ENCODE measurements at regions of chr2 and their contacts with region 1.

Region 1: DNA sequence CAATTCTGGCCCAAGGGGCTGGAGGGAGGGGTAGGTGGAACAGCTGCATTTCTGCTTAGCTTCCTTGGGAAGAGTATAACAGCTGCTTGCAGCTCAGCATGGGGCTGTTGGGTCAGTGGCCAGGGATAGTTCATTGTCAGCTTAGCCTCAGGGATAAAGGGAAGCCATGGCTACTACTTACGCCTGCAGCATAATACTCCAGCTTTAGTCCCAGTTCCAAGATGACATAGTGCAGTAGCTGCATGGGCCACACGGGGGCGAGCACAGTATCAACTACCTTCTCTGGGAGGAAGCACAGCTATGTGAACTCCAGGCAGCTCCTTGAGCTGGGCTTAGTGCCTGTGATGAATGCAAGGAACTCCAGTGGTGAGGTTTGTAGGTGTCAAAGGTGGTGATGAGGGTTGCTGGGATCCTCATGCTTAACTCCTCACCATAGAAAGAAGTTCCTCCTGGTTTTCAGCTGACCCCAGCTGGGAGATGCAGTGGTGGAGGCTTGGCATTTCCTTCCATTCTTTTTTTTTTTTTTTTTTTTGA is 35.4 kb upstream of the RHOB start:
- DNase-seq: peak; percentile 38
- H3K4me3 ChIP-seq: no peak overlapping the region
- H3K27ac ChIP-seq: no peak overlapping the region
- H3K27me3 ChIP-seq: no peaks in the 10 kb centered on the region
- CTCF ChIP-seq: peak; percentile 88

Region 2: DNA sequence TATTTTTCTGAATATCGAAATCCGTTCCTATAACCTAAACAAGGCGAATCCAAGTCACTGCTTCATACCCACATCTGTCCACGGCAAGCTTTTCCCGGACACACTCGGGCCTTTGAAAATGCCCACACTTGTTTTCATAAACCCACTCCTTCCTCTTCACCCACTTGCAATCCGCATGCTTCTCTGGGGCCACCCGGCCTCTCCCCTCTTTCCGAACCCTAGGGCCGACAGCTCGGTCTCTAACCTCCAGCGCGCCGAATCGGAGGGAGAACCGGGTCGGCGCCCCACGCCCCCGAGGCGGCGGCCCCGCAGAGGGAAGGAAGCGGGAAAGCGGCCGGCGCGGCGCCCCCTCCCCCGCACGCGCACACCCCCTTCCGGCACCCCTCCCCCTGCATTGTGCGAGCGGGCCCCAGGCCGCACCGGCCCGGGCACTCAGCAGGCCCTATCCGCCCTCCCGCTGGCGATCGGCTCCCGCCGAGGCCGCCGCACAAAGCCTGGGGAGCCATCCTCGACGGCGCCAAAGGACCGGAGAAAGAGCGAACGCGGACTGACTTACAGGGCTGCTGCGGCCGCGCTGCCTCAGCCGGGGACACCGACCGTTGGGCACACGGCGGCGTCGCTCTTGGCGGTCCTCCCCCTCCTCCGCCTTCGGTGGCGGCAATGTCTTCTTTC is 61.3 kb before region 1 on chr2:
- CTCF ChIA-PET with region 1: no interaction called
- POLR2A ChIA-PET with region 1: no interaction called
- DNase-seq: no peak
- H3K4me3 ChIP-seq: peak overlapping the region; percentile 81
- H3K27ac ChIP-seq: peak overlapping the region; percentile 68
- H3K27me3 ChIP-seq: no peaks in the 10 kb centered on the region
- CTCF ChIP-seq: no peak

Region 3: DNA sequence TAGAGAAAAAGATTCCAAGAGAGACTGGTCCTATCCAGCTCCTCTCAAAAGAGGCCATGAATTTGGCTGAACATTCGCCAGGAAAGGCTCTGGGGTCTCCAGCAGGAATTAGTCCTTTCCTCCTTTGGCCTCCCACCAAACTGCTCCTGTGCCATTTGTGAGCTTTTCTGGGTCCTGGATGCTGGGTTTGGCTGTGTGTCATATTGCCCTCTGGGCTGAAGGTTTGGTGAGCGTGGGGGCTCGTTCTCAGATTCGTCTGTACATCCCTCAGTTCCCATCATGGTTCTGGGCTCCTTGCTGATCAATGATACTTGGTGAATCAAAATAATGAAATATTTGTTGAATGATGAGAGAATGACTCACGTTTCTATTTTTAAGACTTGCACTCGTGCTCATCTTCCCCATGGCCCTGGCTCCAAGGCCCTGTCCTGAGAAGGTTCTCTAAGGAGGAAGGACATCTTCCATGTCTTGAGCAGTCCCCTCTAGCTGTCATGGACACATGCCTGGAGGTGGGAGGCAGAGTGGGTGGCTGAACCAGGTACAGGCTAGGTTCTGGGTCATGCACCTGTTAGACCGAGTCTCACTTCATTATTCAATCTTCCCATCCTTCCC is 12.4 kb before region 1 on chr2:
- CTCF ChIA-PET with region 1: interaction called, 45 read pairs
- POLR2A ChIA-PET with region 1: no interaction called
- DNase-seq: no peak
- H3K4me3 ChIP-seq: no peak overlapping the region
- H3K27ac ChIP-seq: no peak overlapping the region
- H3K27me3 ChIP-seq: peaks cover 19% of the 10 kb centered on the region
- CTCF ChIP-seq: no peak

Region 4: DNA sequence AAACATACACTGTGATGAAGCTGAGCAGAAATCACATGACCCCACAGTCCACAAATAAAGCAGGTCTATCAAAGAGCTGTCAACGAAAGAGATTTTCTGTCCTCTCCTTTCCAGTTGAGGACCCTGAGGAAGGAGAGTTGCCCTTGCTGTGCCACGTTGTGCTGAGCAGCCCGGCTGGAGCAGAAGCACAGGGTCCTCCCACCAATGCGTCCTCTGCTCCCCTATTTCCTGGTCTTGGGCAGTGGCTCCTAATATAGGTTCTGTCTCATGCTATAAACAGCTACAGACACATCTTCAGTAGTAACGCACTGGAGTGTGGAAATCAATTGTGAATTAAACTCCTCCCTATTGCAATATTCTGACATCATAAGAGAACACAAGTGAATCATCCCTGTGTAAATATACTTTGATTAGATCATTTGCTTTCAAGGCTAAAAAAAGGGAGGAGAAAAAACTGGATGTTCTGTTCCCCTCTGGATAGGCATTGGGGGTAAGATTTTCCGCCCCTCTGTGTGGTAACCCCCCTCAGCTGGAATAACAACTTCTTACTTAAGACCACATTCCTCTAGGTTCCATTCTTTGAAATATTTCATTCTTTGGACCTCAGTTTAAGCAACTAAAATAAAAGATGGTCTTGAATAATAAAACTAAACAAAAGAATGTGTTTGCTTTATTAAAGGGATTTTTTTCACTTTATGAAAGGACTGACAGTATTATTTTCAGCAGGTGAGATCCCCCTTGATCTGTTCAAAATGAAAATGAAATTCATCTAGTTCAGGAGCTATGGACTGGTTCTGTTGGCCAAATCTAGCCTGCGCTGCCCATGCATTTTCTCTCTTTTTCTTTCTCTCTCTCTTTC is 27.1 kb after region 1 on chr2:
- CTCF ChIA-PET with region 1: interaction called, 71 read pairs
- POLR2A ChIA-PET with region 1: interaction called, 5 read pairs
- DNase-seq: no peak
- H3K4me3 ChIP-seq: no peak overlapping the region
- H3K27ac ChIP-seq: peak overlapping the region; percentile 69
- H3K27me3 ChIP-seq: no peaks in the 10 kb centered on the region
- CTCF ChIP-seq: no peak

Region 5: DNA sequence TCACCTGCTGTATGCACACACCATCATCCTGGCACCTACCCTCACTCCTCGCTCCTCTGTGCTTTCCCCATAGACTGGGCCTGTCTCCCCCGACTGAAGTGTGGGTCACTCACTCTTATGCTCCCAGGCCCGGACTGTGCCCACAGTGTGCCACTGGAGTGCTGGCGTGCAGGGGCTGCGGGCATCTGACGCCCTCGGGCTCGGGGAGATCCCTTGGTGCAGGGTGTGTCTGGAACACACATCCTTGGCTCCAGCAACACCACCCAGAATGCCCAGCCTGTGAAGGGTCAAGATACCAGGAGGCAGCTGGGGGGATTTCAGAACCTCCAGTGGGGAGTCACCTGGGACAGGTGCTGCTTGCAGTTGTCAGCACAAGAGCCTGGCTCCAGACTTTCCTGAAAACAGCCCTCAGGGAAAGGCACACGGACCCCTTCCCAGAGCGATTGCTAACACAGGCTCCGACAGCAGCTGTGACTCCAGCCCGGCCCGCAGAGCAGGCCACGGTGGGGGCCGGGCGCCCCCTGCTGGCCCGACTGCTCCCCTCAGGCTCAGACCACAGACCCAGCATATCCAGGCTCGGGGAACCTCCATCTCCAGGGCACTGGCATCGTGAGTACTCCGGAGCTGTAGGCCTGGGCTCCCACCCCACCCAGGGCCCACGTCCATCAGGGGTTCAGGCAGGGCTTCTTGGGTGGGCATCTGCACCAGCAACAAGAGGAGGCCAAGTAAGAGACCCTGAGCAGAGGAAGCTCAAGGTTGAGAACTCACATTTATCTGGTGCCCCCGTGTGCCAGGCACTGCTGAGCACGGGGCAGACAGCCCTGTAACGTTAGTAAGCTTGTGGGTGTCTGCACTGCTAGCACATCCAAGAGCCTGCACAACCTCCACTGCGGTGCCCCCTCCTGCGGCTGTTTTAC is 230.9 kb after region 1 on chr2:
- CTCF ChIA-PET with region 1: interaction called, 118 read pairs
- POLR2A ChIA-PET with region 1: no interaction called
- DNase-seq: no peak
- H3K4me3 ChIP-seq: no peak overlapping the region
- H3K27ac ChIP-seq: no peak overlapping the region
- H3K27me3 ChIP-seq: no peaks in the 10 kb centered on the region
- CTCF ChIP-seq: peak; percentile 94